Sigmoid colon (tissue), 7 donors: ENCODE measurements at regions of chr12 and their contacts with region 1.

Region 1: DNA sequence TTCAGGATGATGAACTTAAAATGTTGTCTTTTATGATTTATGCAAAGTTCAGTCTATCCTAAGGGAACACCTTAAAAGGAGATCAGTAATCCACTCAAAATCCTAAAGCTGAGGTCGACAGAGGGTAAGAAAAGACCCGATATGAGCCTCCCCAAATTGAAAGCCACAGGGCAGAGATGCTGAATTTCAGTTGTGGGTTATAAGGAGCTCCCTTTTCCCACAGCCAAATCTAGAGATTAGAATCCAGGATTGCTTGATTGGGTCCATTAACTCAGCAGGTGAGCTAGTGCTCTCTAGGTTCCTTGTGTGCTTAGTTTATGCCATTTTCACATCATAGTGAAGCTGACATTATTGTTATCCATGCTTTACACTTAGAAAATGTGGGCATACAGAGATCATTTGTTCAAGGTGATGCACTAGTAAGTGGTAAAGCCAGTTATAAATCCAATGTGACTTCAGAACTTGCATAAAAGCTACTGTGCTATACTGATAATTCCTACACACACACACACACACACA is 417.5 kb downstream of the TMEM117 start:
- DNase-seq: no peak
- H3K4me3 ChIP-seq: no peak overlapping the region
- H3K27ac ChIP-seq: no peak overlapping the region
- H3K4me1 ChIP-seq: no peaks in the 10 kb centered on the region
- H3K27me3 ChIP-seq: no peaks in the 10 kb centered on the region
- CTCF ChIP-seq: no peak
- EP300 ChIP-seq: no peak
- POLR2A ChIP-seq: no peak

Region 2: DNA sequence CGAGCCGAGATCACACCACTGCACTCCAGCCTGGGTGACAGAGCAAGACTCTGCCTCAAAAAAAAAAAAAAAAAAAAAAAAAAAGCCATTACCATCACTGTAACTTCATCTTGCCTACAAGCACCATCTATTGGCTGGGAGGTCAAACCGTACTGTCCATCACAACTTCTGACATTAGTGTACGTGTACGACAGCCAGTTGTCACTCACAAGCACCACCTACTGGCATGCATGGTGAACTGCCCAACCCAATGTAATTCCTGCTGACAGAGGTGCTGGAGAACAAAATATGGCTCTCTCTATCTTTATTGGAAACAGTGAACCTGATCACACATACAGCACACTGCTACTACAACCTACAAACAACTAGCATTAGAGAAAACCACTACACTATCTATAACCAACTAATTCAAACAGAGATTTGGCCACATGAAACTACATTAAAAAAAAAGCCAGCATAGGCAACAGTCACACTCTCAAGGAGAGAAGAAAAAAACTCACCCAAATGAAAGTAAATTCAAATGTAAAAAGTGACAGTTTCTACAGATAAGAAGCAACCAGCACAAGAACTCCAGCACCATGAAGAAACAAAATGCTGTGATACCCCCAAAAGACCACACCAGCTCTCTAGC is 577.1 kb before region 1 on chr12:
- intact Hi-C with region 1: loop called (anchors 10 kb)
- DNase-seq: no peak
- H3K4me3 ChIP-seq: no peak overlapping the region
- H3K27ac ChIP-seq: no peak overlapping the region
- H3K4me1 ChIP-seq: no peaks in the 10 kb centered on the region
- H3K27me3 ChIP-seq: no peaks in the 10 kb centered on the region
- CTCF ChIP-seq: no peak
- EP300 ChIP-seq: no peak
- POLR2A ChIP-seq: no peak

Region 3: DNA sequence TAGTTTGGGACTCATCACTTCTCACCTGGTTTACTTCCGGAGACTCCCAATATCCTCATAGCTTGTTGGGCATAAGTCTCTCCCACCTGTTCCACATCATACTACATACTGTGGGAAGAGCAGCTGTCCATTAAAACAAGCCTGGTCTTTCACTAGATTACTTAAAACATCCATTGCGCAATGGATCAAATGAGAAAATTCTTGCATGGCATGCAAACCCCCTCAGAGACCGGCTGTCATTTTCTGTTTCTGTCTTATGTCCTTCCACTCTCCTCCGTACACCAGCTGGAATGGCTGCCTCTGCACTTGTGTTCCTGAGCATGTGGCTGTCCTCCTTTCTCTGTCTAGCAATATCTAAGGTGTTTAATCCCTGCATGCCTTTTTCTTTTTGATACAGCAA is 151.9 kb before region 1 on chr12:
- intact Hi-C with region 1: no loop called
- DNase-seq: no peak
- H3K4me3 ChIP-seq: no peak overlapping the region
- H3K27ac ChIP-seq: no peak overlapping the region
- H3K4me1 ChIP-seq: peaks cover 0 to 11% (median 9%) of the 10 kb centered on the region in 4 donors
- H3K27me3 ChIP-seq: no peaks in the 10 kb centered on the region
- CTCF ChIP-seq: no peak
- EP300 ChIP-seq: no peak
- POLR2A ChIP-seq: no peak